G401 (cell line): ENCODE measurements at regions of chr2 and their contacts with region 1.

Region 1: GRCh38 chr2:120077896-120078295 is 65.0 kb downstream of the EPB41L5 start:
- DNase-seq: no peak

Region 2: GRCh38 chr2:119983108-119983507 is 94.8 kb before region 1 on chr2:
- in situ Hi-C with region 1: loop called (anchors 10 kb)
- DNase-seq: no peak